T-cell (primary cell): ENCODE measurements at regions of chr1 and their contacts with region 1.

Region 1: DNA sequence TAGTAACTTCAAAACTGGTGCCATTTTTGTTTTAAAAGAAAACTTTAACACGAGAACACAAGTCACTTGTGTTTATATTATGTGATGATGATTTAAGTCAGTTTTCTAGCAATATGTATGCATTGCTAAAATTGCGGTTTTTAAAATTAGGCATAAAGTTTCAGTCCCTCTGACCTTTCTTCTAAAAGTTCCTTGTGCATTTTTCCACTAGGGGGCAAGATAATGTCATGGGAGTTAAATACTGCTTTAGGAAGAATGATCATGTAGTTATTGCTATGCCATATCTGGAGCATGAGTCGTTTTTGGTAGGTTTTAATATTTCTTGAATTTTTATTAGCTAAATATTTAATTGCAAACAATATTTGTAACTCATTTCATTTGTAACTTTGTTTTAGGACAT is 10.7 kb downstream of the CDC7 start:
- DNase-seq: peak in 1 of 35 experiments; percentile 68
- ATAC-seq: peak in 3 of 4 experiments; percentile 50 to 60 (median 53)
- H3K4me3 ChIP-seq: no peak overlapping the region
- H3K4me3 Mint-ChIP-seq: no peak overlapping the region
- H3K27ac ChIP-seq: no peak overlapping the region
- H3K27ac Mint-ChIP-seq: no peak overlapping the region
- H3K4me1 ChIP-seq: peaks cover 0 to 4% of the 10 kb centered on the region in 2 experiments
- H3K4me1 Mint-ChIP-seq: peaks cover 4 to 6% (median 6%) of the 10 kb centered on the region in 3 donors
- H3K27me3 ChIP-seq: no peaks in the 10 kb centered on the region
- H3K27me3 Mint-ChIP-seq: no peaks in the 10 kb centered on the region

Region 2: DNA sequence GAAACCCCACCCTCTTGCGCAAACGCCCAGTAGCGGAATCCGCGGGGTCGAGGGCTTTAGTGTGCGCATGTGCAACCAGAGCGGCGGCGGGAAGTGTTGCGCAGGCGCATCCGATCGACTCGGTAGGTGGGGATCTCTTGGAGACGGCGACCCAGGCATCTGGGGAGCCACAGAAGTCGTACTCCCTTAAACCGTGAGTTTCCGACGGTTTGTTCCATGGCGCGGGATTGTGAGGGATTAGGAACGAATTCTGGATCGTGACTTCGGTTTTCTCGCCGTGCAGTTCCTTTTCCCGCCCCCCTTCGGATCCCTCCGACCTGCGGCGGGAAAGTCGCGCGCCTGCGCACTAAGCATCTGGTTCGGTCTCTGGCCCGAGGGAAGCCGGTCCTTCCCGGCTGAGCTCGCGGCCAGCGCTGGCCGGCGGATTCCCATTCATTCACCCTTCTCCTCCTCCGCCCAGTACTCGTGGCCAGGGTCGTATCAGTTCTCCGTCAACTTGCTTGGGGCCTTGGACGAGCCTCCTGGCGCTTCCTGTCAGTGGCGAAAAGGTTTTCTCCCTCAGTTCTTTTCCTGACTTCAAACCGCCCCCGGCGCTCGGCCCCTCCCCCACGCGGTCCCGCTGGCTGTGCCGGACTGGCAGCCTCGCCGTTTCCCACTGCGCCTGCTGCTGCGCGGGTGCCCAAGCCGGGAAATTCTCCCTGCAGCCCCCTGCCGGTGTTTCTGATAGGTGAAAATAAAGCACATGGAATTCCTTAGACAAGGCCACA is 10.4 kb before region 1 on chr1 and contains the start of gene CDC7:
- CTCF ChIA-PET with region 1: interaction called, 8 to 10 read pairs
- POLR2A ChIA-PET with region 1: interaction called in 1 of 2 experiments, 8 read pairs
- DNase-seq: peak; percentile 58 to 90 (median 78)
- ATAC-seq: peak; percentile 85 to 88 (median 87)
- H3K4me3 ChIP-seq: peak within 1 kb of the TSS; percentile 95 to 100
- H3K4me3 Mint-ChIP-seq: no peak within 1 kb of the TSS
- H3K27ac ChIP-seq: peak within 1 kb of the TSS; percentile 79
- H3K27ac Mint-ChIP-seq: no peak within 1 kb of the TSS
- H3K4me1 ChIP-seq: peaks cover 7 to 11% of the 10 kb centered on the region in 2 experiments
- H3K4me1 Mint-ChIP-seq: peaks cover 17 to 28% (median 25%) of the 10 kb centered on the region in 3 donors
- H3K27me3 ChIP-seq: no peaks in the 10 kb centered on the region
- H3K27me3 Mint-ChIP-seq: no peaks in the 10 kb centered on the region
- total RNA-seq, gene CDC7: 3.1 to 6.9 (median 6.3) TPM

Region 3: DNA sequence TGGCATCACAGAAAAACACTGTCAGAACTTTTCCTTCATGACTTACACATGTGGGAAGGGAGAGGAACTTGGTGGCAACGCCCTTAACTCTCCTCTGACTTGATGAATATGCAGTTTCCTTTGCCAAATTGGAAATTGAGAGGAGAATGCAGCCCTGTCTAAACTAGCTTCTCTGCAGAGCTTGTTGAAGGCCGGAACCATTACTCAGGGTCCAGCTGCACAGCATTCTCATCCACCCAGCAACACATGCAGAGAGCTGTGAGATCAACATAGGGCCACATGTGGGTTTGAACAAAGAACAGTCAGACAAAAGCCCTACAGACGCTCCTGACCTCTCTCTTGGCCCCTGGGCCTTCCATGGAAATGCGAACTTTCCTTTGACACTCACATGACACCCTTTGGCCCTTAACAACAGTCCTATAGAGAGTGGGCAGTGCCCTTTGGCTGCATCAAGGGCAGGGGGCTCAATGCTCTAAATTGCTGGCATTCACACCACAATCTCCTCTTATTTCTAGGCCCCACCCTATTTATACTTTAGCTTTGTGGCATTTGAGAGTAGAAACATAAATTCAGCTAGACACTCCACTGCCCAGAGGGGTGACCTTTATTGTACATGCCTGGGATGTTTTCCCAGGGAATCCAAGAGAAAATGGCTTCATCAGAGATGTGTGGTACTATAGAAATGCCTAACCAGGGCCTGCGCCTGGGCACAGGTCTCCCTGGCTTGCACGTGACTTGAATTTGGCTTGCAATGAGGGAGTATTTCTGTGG is 53.7 kb after region 1 on chr1:
- CTCF ChIA-PET with region 1: interaction called, 8 to 10 read pairs
- POLR2A ChIA-PET with region 1: no interaction called
- DNase-seq: no peak
- ATAC-seq: no peak
- H3K4me3 ChIP-seq: no peak overlapping the region
- H3K4me3 Mint-ChIP-seq: no peak overlapping the region
- H3K27ac ChIP-seq: no peak overlapping the region
- H3K27ac Mint-ChIP-seq: no peak overlapping the region
- H3K4me1 ChIP-seq: peaks cover 6 to 24% of the 10 kb centered on the region in 2 experiments
- H3K4me1 Mint-ChIP-seq: peaks cover 20 to 29% (median 25%) of the 10 kb centered on the region in 3 donors
- H3K27me3 ChIP-seq: no peaks in the 10 kb centered on the region
- H3K27me3 Mint-ChIP-seq: no peaks in the 10 kb centered on the region

Region 4: GRCh38 chr1:91872560-91873081 is 361.2 kb after region 1 on chr1:
- CTCF ChIA-PET with region 1: interaction called in 1 of 2 experiments, 10 read pairs
- POLR2A ChIA-PET with region 1: interaction called in 1 of 2 experiments, 6 read pairs
- DNase-seq: peak in 5 of 35 experiments; percentile 9 to 46 (median 14)
- ATAC-seq: peak; percentile 48 to 68 (median 58)
- H3K4me3 ChIP-seq: no peak overlapping the region
- H3K4me3 Mint-ChIP-seq: peak overlapping the region; percentile 36 to 73 (median 62)
- H3K27ac ChIP-seq: no peak overlapping the region
- H3K27ac Mint-ChIP-seq: peak overlapping the region; percentile 58 to 74
- H3K4me1 ChIP-seq: peaks cover 7 to 58% of the 10 kb centered on the region in 2 experiments
- H3K4me1 Mint-ChIP-seq: peaks cover 55 to 80% (median 57%) of the 10 kb centered on the region in 3 donors
- H3K27me3 ChIP-seq: no peaks in the 10 kb centered on the region
- H3K27me3 Mint-ChIP-seq: peaks cover 0 to 3% of the 10 kb centered on the region in 2 donors

Region 5: GRCh38 chr1:91924146-91924545 is 412.8 kb after region 1 on chr1:
- CTCF ChIA-PET with region 1: interaction called, 41 to 69 read pairs
- POLR2A ChIA-PET with region 1: no interaction called
- DNase-seq: no peak
- ATAC-seq: no peak
- H3K4me3 ChIP-seq: no peak overlapping the region
- H3K4me3 Mint-ChIP-seq: no peak overlapping the region
- H3K27ac ChIP-seq: no peak overlapping the region
- H3K27ac Mint-ChIP-seq: no peak overlapping the region
- H3K4me1 ChIP-seq: peaks cover 0 to 3% of the 10 kb centered on the region in 2 experiments
- H3K4me1 Mint-ChIP-seq: peaks cover 0 to 5% (median 0%) of the 10 kb centered on the region in 3 donors
- H3K27me3 ChIP-seq: no peaks in the 10 kb centered on the region
- H3K27me3 Mint-ChIP-seq: no peaks in the 10 kb centered on the region